ENCODE measurements at regions of chr1 and their contacts with region 1.

Region 1: GRCh38 chr1:93749894-93750301 is 68.3 kb upstream of the BCAR3 start:
- DNase-seq: no peak
- ATAC-seq: peak; percentile 62
- H3K4me3 Mint-ChIP-seq: peak overlapping the region; percentile 76
- H3K27ac Mint-ChIP-seq: peak overlapping the region; percentile 94
- H3K4me1 Mint-ChIP-seq: peaks cover 60% of the 10 kb centered on the region
- H3K27me3 Mint-ChIP-seq: no peaks in the 10 kb centered on the region
- CTCF ChIP-seq: no peak

Region 2: GRCh38 chr1:93638981-93639380 is 110.9 kb before region 1 on chr1:
- CTCF ChIA-PET with region 1: interaction called, 6 read pairs
- POLR2A ChIA-PET with region 1: interaction called, 9 read pairs
- intact Hi-C with region 1: loop called (anchors 1 kb)
- DNase-seq: no peak
- ATAC-seq: no peak
- H3K4me3 Mint-ChIP-seq: no peak overlapping the region
- H3K27ac Mint-ChIP-seq: no peak overlapping the region
- H3K4me1 Mint-ChIP-seq: peaks cover 31% of the 10 kb centered on the region
- H3K27me3 Mint-ChIP-seq: no peaks in the 10 kb centered on the region
- CTCF ChIP-seq: no peak

Region 3: DNA sequence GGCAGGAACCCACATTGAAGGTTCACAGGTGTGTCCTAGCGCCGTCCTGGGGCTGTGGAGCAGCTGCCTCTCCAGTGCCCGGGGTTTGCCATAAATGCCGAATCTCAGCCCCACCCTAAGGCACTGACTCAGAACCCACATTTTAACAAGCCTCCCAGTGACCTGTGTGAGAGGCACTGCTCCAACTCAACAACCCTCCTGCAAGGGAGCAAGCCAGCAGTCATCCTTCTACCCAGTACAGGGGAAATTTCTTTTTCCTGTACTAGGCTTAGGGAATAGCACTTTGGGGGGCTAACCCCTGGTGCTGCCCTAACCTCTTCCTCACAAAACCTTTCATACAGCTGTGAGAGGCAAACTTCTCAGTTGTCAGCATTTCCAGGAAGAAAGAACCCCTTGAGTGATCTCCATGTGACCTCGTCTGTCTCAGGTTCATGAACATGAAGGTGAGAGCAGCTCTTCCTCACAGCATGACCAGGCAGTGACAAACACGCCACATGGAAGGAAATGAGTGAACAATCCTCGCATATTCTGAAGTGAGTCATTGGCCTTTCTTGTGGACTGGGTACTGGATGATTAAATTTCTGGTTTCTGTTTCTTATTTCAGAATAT is 56.8 kb before region 1 on chr1:
- CTCF ChIA-PET with region 1: interaction called, 7 read pairs
- POLR2A ChIA-PET with region 1: interaction called, 30 read pairs
- intact Hi-C with region 1: loop called (anchors 1 kb)
- DNase-seq: no peak
- ATAC-seq: peak; percentile 80
- H3K4me3 Mint-ChIP-seq: peak overlapping the region; percentile 64
- H3K27ac Mint-ChIP-seq: no peak overlapping the region
- H3K4me1 Mint-ChIP-seq: peaks cover 16% of the 10 kb centered on the region
- H3K27me3 Mint-ChIP-seq: no peaks in the 10 kb centered on the region
- CTCF ChIP-seq: no peak

Region 4: DNA sequence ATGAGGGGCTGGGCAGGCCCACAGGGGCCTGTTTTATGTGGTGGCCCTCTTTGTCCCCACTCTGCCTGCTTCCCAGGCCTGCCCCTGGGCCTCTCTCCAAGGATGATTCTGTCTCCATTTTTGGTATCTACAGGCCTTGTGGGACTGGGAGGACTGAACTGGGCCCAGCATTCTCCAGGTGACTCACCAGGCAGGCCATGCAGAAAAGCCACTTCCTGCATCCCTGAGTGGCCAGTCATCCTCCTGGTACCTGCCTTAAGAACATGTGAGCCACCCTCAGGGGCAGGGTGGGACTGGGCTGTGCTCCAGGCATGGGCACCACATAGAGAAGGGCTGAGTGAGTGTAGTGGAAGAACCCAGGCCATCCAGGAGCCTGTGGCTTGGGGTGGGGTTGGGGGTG is 48.3 kb before region 1 on chr1:
- CTCF ChIA-PET with region 1: interaction called, 3 read pairs
- POLR2A ChIA-PET with region 1: interaction called, 9 read pairs
- intact Hi-C with region 1: loop called (anchors 1 kb)
- DNase-seq: no peak
- ATAC-seq: peak; percentile 47
- H3K4me3 Mint-ChIP-seq: no peak overlapping the region
- H3K27ac Mint-ChIP-seq: peak overlapping the region; percentile 46
- H3K4me1 Mint-ChIP-seq: peaks cover 69% of the 10 kb centered on the region
- H3K27me3 Mint-ChIP-seq: no peaks in the 10 kb centered on the region
- CTCF ChIP-seq: no peak

Region 5: DNA sequence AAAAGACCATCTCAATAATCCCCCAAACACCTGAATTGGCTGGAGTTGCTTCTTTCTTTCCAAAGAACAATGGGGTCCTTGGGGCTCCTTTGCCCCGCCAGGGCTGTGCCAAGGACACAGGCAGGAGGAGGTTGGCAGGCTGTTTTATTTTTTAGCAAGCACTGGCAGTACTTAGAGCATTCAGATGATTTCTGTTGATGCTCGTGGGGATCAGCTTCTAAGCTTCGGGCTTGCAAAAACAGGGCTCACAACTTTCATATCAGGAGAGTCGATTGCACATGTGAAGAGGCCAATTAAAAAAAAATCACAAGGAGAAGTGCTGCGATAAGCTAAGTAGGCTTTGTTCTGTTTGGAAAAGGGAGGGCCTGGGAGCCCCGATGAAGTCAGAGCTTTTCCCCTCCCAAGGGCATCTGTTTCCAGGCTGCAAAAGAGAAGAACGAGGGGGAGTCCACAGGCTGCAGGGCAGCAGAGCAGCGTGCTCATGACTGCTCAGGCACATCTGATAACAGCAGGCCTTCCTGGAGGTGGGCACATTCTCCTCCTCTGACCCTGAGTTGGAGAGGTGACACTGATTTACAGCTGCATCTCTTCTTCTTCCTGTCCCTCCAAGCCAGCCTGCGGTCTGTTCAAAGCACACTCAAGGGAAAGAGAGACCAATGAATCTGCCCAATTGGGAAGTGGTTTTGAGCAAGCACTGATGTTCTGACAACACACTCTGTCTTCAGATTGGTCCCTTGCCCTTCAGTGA is 41.0 kb before region 1 on chr1:
- CTCF ChIA-PET with region 1: interaction called, 3 read pairs
- POLR2A ChIA-PET with region 1: interaction called, 19 read pairs
- intact Hi-C with region 1: loop called (anchors 1 kb)
- DNase-seq: no peak
- ATAC-seq: no peak
- H3K4me3 Mint-ChIP-seq: peak overlapping the region; percentile 72
- H3K27ac Mint-ChIP-seq: peak overlapping the region; percentile 90
- H3K4me1 Mint-ChIP-seq: peaks cover 68% of the 10 kb centered on the region
- H3K27me3 Mint-ChIP-seq: no peaks in the 10 kb centered on the region
- CTCF ChIP-seq: no peak

Region 6: GRCh38 chr1:93715529-93716126 is 34.3 kb before region 1 on chr1:
- CTCF ChIA-PET with region 1: no interaction called
- POLR2A ChIA-PET with region 1: interaction called, 10 read pairs
- intact Hi-C with region 1: no loop called
- DNase-seq: no peak
- ATAC-seq: peak; percentile 53
- H3K4me3 Mint-ChIP-seq: no peak overlapping the region
- H3K27ac Mint-ChIP-seq: peak overlapping the region; percentile 61
- H3K4me1 Mint-ChIP-seq: peaks cover 37% of the 10 kb centered on the region
- H3K27me3 Mint-ChIP-seq: no peaks in the 10 kb centered on the region
- CTCF ChIP-seq: no peak

Region 7: DNA sequence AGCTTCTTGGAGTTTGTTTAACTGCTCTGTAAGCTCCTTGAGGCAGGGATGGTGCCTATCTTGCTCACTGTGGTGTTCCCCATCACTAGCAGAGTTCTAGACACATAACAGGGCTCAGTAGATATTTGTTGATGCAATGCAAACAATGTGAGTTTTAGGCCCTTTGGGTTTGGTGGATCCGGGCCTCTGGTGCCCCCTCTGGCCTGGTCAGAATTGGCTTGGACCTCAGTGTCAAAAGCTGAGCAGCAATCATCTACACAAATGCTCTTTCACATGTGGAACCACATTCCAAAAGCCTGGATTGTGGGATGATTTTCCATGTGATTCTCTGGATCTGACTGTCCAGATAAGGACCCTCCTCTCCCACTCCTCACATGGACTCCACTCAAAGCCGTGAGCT is 14.9 kb before region 1 on chr1:
- CTCF ChIA-PET with region 1: interaction called, 7 read pairs
- POLR2A ChIA-PET with region 1: interaction called, 5 read pairs
- intact Hi-C with region 1: loop called (anchors 2 kb)
- DNase-seq: no peak
- ATAC-seq: peak; percentile 28
- H3K4me3 Mint-ChIP-seq: no peak overlapping the region
- H3K27ac Mint-ChIP-seq: no peak overlapping the region
- H3K4me1 Mint-ChIP-seq: peaks cover 14% of the 10 kb centered on the region
- H3K27me3 Mint-ChIP-seq: no peaks in the 10 kb centered on the region
- CTCF ChIP-seq: no peak